Activated B cell treated with CpG ODN at 0.5 μM for 24 hours (primary cell): ENCODE measurements at regions of chr9 and their contacts with region 1.

Region 1: DNA sequence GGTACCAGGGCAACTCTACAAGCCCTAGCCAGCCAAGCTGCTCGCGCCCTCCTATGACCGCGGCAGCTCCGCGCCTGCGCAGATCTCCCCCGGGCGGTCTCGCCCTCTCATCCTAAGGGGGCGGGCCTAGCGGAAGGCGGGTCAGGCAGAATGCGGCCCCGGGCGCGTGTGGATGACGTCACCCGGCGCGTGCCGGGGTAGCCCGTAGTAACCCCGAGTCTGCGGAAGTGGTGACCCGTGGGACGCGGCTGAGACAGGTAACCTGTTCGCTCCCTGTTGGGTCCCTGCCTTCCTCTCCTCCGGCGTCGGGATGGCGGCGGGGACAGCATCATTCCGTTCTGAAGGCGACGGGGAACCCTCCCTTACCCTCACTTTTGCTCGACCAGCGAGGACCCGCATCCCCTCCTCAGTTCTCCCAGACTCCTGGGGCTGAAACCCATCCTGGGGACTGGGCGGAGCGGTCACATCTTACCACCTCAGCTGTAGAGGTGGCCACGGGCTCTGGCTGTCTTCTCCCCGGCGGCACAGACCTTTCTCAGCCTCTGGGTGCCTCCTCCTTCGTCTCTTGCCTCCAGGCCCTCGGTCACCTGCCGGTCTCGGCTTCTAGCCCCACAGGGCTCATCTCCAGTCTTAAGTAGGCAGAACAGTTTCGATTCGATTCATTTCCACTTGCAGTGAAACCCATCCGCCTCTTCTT is at the start of gene AOPEP:
- DNase-seq: peak; percentile 99
- ATAC-seq: peak; percentile 96
- H3K4me3 Mint-ChIP-seq: peak within 1 kb of the TSS; percentile 98
- H3K27ac Mint-ChIP-seq: peak within 1 kb of the TSS; percentile 96
- H3K4me1 Mint-ChIP-seq: peaks cover 8% of the 10 kb centered on the region
- H3K27me3 Mint-ChIP-seq: peaks cover 2% of the 10 kb centered on the region
- CTCF ChIP-seq: no peak
- total RNA-seq, gene AOPEP: 16.8 and 20.4 TPM in 2 replicates

Region 2: DNA sequence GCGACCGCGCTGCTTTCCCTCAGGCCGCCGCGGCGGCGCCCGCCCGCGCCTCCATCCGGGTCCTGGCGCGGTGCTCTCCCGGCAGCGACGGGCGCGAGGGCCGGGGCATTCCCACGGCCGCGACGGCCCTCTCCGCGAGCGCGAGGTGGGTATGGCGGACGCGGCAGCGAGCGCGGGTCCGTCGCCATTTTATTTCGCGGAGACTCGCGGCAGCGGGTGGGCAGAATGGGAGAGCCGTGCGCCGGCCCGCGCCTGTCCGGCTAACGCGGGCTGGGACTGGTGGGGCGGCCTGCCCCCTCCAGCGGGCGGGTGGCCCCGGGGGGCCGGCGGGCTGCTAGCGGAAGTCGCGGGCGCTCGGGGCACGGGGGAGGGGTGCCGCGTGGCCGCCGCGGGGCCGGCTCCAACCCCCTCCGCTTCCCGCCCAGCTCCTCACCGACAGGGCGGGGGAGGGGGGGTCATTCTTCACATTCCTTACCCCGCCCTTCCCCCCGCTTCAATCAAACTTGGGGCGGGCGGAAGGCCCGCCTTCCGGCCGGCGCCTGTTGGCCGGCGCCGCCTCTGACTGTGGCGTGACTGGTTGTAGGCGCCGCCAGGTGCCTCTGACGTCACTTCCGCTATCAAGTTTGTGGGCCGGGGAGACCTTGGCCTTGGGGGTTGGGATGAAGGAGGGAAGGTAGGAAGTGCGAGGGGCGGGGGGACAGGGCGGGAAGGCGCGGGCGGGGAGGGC is 560.2 kb before region 1 on chr9:
- CTCF ChIA-PET with region 1: no interaction called
- POLR2A ChIA-PET with region 1: no interaction called
- intact Hi-C with region 1: loop called (anchors 5 kb)
- DNase-seq: peak; percentile 85
- ATAC-seq: peak; percentile 63
- H3K4me3 Mint-ChIP-seq: peak overlapping the region; percentile 89
- H3K27ac Mint-ChIP-seq: peak overlapping the region; percentile 87
- H3K4me1 Mint-ChIP-seq: peaks cover 49% of the 10 kb centered on the region
- H3K27me3 Mint-ChIP-seq: no peaks in the 10 kb centered on the region
- CTCF ChIP-seq: no peak

Region 3: GRCh38 chr9:94498801-94499453 is 227.7 kb before region 1 on chr9:
- CTCF ChIA-PET with region 1: no interaction called
- POLR2A ChIA-PET with region 1: no interaction called
- intact Hi-C with region 1: no loop called
- DNase-seq: no peak
- ATAC-seq: no peak
- H3K4me3 Mint-ChIP-seq: no peak overlapping the region
- H3K27ac Mint-ChIP-seq: no peak overlapping the region
- H3K4me1 Mint-ChIP-seq: peaks cover 4% of the 10 kb centered on the region
- H3K27me3 Mint-ChIP-seq: peaks cover 7% of the 10 kb centered on the region
- CTCF ChIP-seq: no peak

Region 4: DNA sequence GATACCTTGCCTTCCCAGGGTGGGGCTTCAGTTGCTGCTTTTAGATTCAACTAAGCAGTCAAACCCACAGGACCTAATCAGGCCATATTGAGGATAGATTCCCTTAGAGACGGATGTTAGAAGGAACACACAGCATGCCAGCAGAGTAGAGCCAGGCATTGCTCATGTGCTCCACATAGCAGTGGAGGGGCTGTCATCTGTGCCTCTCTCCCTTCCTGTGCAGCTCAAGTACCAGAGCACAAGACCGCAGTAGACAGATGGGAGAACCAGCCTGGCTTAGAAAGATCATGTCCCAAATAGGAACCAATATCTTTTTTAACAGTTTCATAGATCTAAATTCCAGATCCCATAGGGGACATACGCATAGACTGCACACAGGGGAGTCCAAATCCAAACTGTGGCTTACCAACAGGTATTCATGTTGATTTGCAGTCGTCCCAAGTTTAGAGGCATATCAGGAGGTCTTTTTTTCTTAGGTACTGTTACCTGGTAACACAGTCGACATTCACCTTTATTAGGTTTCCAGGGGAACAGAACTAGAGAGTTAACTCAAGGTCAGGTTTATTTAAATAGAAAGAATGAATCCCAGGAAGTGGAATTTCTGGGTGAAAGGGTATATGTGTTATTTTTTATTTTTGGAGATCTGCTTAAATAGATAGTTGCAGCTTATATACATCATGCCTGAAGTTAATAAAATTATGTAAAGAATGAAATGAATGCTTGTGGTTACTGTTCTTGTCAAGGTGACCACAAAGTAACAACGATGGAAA is 215.3 kb before region 1 on chr9:
- CTCF ChIA-PET with region 1: no interaction called
- POLR2A ChIA-PET with region 1: no interaction called
- intact Hi-C with region 1: no loop called
- DNase-seq: no peak
- ATAC-seq: no peak
- H3K4me3 Mint-ChIP-seq: no peak overlapping the region
- H3K27ac Mint-ChIP-seq: no peak overlapping the region
- H3K4me1 Mint-ChIP-seq: peaks cover 4% of the 10 kb centered on the region
- H3K27me3 Mint-ChIP-seq: peaks cover 2% of the 10 kb centered on the region
- CTCF ChIP-seq: no peak

Region 5: DNA sequence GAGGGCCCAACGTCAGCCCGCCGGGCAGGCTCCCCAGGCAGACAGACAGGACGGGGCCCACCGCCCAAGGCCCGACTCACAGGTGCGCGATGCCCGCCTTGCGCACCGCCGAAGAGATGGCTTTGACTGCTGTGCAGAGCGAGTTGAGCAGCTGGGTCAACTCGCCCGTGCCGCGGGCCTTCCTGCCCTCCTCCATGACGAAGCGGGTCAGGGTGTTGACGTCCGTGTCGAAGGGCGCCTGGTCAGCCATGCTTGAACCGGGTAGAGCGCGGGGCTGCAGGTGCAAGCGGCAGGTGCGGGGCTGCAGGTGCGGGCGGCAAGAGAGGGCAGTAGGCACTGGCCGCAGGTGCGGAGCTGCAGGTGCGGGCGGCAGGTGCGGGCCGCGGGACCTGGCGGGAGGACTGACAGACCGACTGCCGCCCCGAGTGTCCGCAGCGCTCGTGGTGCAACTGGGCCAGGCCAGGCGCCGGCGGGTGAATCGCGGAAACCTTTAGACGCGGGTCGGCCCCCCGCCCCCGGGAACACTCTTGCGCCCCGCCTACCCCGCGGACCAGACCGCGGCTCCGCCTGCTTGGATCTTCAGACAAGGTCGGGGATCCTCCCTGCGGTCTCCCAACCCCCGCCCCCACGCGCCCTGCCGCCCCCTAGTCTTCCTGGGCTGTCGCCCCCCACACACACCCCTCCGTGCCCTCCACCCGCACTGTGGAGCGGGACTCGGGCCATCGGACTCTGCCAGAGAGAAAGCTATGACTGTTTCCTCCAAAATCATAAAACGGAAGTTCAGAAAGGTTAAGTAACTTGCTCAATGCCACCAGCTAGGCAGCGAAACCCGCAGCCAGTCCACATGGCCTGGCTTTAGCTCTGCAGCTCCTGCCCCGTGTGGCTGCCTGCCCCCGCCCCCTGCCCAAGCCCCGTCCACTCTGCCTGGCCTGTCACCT is 87.3 kb before region 1 on chr9 and contains the start of gene FBP1:
- CTCF ChIA-PET with region 1: no interaction called
- POLR2A ChIA-PET with region 1: no interaction called
- intact Hi-C with region 1: loop called (anchors 1 kb)
- DNase-seq: peak; percentile 55
- ATAC-seq: peak; percentile 82
- H3K4me3 Mint-ChIP-seq: peak within 1 kb of the TSS; percentile 96
- H3K27ac Mint-ChIP-seq: peak within 1 kb of the TSS; percentile 68
- H3K4me1 Mint-ChIP-seq: peaks cover 18% of the 10 kb centered on the region
- H3K27me3 Mint-ChIP-seq: peaks cover 5% of the 10 kb centered on the region
- CTCF ChIP-seq: no peak
- total RNA-seq, gene FBP1: 0.80 and 1.2 TPM in 2 replicates

Region 6: DNA sequence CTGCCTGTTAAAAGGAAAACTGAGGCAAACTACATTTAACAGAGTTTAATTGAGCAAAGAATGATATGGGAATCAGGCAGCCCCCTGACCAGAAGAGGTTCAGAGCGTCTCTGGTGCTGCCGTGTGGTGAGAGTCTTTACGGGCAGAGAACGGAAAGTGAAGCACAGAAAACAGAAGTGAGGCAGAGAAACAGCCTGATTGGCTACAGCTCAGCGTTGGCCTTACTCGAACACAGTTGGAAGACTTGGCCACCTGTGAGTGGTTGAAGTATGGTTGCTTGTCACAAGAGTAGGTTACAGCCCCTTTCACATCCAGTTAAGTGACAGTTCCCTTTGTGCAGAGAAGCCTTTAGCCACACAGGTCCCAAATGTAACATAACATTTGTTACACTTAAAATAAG is 70.4 kb before region 1 on chr9:
- CTCF ChIA-PET with region 1: no interaction called
- POLR2A ChIA-PET with region 1: interaction called, 16 read pairs
- intact Hi-C with region 1: no loop called
- DNase-seq: peak; percentile 36
- ATAC-seq: peak; percentile 100
- H3K4me3 Mint-ChIP-seq: peak overlapping the region; percentile 80
- H3K27ac Mint-ChIP-seq: peak overlapping the region; percentile 90
- H3K4me1 Mint-ChIP-seq: peaks cover 18% of the 10 kb centered on the region
- H3K27me3 Mint-ChIP-seq: no peaks in the 10 kb centered on the region
- CTCF ChIP-seq: no peak

Region 7: DNA sequence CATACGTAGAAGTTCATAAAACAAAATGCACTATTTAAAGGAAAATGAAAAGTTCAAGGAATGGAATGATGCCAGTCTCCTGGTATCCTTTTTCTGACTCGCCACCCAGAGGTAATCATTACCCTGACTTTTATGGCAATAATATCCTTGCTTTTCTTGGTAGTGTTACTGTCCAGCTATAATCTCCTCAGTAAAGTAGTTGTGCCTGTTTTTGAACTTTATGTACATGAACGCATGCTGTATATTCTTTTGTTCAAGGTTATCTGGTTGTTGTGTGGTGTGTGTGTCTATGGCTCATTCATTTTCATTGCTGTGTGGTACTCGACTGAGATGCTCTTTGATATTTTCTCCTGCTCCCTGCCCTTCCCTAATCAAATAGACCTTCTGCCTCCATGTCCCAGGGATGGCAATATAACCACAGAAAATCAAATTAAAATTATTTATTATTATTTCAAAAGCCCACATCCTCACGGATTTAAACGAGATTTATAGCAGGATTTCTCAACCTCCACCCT is 58.2 kb before region 1 on chr9:
- CTCF ChIA-PET with region 1: no interaction called
- POLR2A ChIA-PET with region 1: interaction called, 3 read pairs
- intact Hi-C with region 1: loop called (anchors 5 kb)
- DNase-seq: no peak
- ATAC-seq: no peak
- H3K4me3 Mint-ChIP-seq: no peak overlapping the region
- H3K27ac Mint-ChIP-seq: no peak overlapping the region
- H3K4me1 Mint-ChIP-seq: peaks cover 2% of the 10 kb centered on the region
- H3K27me3 Mint-ChIP-seq: peaks cover 6% of the 10 kb centered on the region
- CTCF ChIP-seq: no peak

Region 8: DNA sequence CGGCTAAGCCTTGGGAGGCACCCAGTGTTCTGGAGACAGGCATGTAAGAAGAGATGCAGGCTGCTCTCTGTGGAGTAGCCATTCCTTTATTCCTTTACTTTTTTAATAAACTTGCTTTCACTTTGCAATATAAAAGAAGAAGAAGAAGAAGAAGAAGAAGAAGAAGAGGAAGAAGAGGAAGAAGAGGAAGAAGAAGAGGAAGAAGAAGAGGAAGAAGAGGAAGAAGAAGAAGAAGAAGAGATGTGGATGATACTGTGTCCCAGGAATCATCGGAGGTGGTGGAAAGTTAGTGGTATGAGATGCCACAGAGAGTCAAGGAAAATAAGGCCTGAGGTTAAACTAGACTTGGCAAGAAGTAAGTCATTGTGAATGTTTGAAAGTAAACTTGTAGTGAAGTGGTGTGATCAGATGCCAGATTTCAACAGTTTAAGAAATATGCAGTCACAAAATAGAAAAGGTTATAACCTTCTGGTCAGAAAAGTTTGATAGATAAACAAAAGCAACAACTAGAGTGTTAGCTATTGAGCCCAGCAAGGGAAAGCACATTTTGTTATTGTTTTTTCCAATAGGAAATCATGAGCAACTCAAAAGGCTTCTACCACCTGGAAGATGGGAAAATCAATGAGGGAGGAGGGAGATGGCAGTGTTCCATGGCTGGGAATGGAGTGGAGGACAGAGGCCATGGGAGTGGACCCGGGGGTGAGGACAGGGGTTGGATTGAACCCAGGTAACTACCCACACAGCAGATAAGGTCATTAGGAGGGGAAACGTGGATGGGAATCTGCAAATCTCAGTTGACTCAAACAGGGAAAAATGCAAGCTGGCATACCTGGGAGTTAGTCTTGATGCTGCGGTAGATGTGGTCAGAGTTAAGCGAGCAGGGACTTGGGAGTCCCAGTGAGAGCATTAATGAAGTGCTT is 16.7 kb after region 1 on chr9:
- CTCF ChIA-PET with region 1: no interaction called
- POLR2A ChIA-PET with region 1: no interaction called
- intact Hi-C with region 1: no loop called
- DNase-seq: no peak
- ATAC-seq: no peak
- H3K4me3 Mint-ChIP-seq: no peak overlapping the region
- H3K27ac Mint-ChIP-seq: no peak overlapping the region
- H3K4me1 Mint-ChIP-seq: peaks cover 8% of the 10 kb centered on the region
- H3K27me3 Mint-ChIP-seq: no peaks in the 10 kb centered on the region
- CTCF ChIP-seq: no peak

Region 9: DNA sequence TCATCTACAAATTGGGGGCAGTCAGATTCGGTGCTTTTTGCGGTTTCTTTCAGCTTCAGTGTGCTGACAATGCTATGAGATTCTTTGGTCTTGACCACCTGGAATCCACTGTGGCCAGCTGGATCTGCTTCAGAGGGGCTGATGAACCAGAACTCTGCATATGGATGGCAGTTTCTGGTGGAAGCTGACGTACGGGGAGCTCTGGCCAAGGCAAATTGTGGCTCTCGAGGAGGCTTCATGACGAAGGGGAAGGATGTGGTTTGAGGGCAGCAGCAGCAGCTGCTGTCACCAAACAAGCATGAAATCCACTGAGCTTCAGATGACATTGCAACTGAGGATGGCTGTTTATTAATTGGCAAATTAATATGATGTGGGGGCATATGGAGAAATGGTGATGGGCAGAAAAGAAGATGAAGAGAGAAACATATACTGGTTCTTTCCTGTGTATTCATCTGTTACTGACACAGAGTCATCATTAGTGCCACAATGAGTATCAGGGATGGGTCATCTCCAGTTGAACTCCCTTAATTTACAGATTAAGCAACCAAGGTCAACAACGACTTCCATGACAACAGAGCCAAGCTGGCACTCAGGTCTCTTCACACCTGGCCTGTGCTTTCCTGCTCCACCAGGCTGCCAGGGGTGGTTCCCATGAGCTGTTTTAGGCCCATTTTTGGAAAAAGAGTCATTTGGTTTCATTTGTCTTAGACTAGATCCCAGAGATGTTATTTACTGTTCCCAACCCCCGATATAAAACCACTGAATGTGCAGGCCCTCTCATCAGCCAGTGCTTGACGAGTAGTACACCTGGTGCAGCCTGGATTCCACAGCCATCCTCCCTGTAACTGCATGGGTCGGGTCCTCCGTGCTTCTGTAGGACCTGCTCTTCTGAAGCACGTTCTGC is 134.6 kb after region 1 on chr9:
- CTCF ChIA-PET with region 1: no interaction called
- POLR2A ChIA-PET with region 1: interaction called, 7 read pairs
- intact Hi-C with region 1: loop called (anchors 5 kb)
- DNase-seq: peak; percentile 44
- ATAC-seq: peak; percentile 86
- H3K4me3 Mint-ChIP-seq: peak overlapping the region; percentile 58
- H3K27ac Mint-ChIP-seq: peak overlapping the region; percentile 47
- H3K4me1 Mint-ChIP-seq: peaks cover 42% of the 10 kb centered on the region
- H3K27me3 Mint-ChIP-seq: no peaks in the 10 kb centered on the region
- CTCF ChIP-seq: no peak

Region 10: DNA sequence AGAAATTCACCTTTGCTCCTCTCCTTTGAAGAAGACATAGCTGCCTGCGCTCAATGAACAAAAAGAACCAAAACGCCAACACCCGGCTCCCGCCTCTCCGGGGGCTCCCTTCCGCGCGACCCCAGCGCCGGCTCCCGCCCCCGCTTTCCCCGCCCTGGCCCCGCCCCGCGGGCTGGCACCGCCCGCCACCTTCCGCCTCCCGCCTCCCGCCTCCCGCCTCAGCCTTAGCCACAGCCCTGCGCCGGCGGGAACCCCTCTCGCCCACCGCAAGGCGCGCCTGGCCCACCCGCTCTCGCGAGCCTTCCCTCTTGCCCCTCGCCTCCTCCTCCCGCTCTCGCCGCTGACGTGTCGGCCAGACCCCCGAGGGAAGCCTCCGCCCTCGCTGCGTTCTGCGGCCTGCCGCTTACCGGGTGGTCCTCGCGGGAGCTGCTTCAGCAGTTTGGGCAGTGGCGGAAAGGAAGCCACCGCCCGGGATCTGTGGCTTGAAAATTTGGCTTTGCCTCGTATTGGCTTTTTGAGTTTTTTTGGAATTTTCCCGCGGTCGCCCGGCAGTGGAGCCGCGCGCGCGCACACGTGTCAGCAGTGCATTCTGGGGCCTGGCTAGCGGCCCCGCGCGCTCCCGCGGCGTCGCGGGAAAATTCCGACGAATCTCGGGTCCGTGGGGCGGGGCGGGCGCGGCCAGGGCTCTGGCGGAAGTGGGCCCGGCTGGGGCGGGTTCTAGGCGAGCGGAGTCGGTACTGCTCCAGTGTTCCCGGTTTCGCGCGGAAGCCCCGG is 590.7 kb after region 1 on chr9 and contains the start of gene FANCC:
- CTCF ChIA-PET with region 1: no interaction called
- POLR2A ChIA-PET with region 1: no interaction called
- intact Hi-C with region 1: loop called (anchors 2 kb)
- DNase-seq: peak; percentile 89
- ATAC-seq: peak; percentile 84
- H3K4me3 Mint-ChIP-seq: peak within 1 kb of the TSS; percentile 92
- H3K27ac Mint-ChIP-seq: peak within 1 kb of the TSS; percentile 91
- H3K4me1 Mint-ChIP-seq: peaks cover 15% of the 10 kb centered on the region
- H3K27me3 Mint-ChIP-seq: peaks cover 10% of the 10 kb centered on the region
- CTCF ChIP-seq: no peak
- total RNA-seq, gene FANCC: 10.4 and 11.4 TPM in 2 replicates

Region 11: GRCh38 chr9:95349091-95350038 is 622.7 kb after region 1 on chr9:
- CTCF ChIA-PET with region 1: no interaction called
- POLR2A ChIA-PET with region 1: no interaction called
- intact Hi-C with region 1: no loop called
- DNase-seq: no peak
- ATAC-seq: no peak
- H3K4me3 Mint-ChIP-seq: no peak overlapping the region
- H3K27ac Mint-ChIP-seq: no peak overlapping the region
- H3K4me1 Mint-ChIP-seq: no peaks in the 10 kb centered on the region
- H3K27me3 Mint-ChIP-seq: peaks cover 21% of the 10 kb centered on the region
- CTCF ChIP-seq: no peak